Heart right ventricle (tissue), 16 donors: ENCODE measurements at regions of chr15 and their contacts with region 1.

Region 1: DNA sequence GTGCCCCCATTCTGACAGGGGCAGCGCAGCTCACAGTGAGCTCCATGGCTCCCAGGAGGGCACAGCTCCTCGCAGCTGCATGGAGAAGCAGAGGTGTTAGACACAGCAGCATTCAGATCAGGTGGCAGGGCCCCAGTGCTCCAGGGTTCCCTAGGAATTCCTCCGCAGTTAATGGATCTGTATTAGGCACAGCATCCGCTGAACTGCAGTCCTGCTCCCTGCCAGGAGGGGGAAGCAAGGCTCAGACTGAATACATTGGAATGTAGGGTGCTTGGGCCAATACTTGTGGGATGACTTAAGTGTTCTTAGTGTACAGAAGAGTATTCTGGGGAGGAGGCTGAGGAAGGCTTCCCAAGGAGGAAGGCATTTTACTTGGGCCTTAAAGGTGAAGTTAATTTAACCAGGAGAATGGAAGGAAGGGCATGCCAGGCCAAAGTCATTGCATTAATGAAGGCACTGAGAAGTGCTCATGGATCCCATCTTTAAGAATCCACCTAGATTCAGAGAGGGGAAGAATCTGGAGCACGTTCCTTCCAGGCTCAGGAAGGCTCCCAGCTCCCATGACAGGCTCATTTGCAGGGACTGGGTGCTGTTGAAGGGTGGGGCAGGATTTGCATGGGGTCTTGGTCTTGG is 111.6 kb downstream of the RAB11A start:
- DNase-seq: peak; percentile 32 to 45
- ATAC-seq: peak in 7 of 8 donors; percentile 52 to 78 (median 66)
- H3K4me3 ChIP-seq: no peak overlapping the region
- H3K27ac ChIP-seq: no peak overlapping the region
- H3K4me1 ChIP-seq: peaks cover 0 to 11% (median 6%) of the 10 kb centered on the region in 9 donors
- H3K27me3 ChIP-seq: peaks cover 0 to 61% (median 45%) of the 10 kb centered on the region in 7 donors
- CTCF ChIP-seq: peak; percentile 32 to 74 (median 63)

Region 2: GRCh38 chr15:65862682-65863081 is 118.3 kb before region 1 on chr15:
- intact Hi-C with region 1: no loop called
- DNase-seq: no peak
- ATAC-seq: peak in 6 of 8 donors; percentile 33 to 86 (median 44)
- H3K4me3 ChIP-seq: no peak overlapping the region
- H3K27ac ChIP-seq: no peak overlapping the region
- H3K4me1 ChIP-seq: no peaks in the 10 kb centered on the region
- H3K27me3 ChIP-seq: no peaks in the 10 kb centered on the region
- CTCF ChIP-seq: peak in 7 of 9 donors; percentile 20 to 55 (median 33)

Region 3: DNA sequence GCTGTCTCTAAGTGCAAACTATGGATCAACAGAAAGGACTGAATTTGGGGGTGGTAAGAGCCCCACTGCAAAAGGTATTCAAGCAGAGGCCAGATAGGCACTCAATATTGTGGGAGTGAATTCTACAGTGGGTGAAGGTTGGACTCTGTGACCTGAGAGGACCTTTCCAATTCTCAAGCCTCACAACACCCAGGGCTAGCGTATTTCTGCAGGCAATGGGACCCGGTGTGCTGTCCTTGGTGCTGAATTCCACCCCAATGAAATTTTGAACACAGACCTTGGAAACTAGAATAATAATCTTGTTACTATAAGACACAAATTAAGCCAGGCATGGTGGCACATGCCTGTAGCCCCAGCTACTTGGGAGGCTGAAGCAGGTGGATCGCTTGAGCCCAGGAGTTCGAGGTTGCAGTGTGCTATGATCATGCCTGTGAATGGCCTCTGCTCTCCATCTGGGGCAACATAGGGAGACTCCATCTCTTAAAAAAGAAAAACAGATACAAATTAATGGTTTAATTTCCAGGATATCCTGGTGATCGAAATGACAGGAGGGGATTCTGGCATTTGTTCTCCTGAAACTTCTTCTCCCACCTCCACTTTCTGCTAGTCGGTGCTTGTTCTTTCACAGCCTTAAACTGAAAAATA is 23.8 kb after region 1 on chr15:
- intact Hi-C with region 1: no loop called
- DNase-seq: peak in 1 of 2 donors; percentile 17
- ATAC-seq: no peak
- H3K4me3 ChIP-seq: no peak overlapping the region
- H3K27ac ChIP-seq: no peak overlapping the region
- H3K4me1 ChIP-seq: no peaks in the 10 kb centered on the region
- H3K27me3 ChIP-seq: peaks cover 0 to 32% (median 15%) of the 10 kb centered on the region in 7 donors
- CTCF ChIP-seq: no peak

Region 4: DNA sequence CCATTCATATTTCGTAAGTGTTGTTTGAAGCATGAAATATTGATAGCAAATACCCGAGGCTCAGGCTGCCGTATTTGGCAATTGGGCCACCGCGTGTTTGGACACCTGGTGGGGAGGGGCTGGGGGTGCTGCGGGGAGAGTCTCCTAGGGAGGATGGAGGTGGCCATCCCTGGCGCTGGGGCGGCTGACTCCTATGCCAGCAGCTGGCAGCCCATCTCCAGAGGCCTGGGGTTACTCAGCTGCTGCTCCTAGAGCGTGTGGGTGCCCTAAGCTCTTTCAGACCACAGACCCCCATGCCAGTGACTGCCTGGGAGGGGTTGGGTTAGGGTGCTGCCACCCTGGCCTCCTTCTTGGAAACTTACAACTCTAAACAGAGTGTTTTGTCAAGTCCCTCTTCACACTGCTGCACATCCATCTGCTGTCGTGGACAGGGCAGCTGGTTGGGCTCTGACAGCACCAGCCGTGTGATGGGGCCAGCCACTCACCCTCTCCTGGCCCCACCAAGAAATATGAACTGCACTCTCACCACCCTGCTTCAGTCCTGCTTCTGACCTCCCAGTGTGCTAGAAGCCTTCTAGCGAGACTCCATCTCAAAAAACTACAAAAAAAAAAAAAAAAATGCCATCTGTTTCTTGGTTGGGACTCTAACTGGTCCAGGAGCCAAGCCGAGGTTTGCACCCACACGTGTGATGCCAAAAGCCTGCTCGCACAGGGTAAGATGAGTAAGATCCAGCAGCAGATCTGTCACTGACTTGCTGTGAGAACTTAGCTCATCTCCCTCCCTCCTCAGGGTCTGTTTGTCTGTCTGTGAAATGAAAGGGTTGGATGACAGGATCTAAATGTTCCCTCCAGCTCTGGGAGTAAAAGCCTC is 116.4 kb after region 1 on chr15:
- intact Hi-C with region 1: loop called in 1 of 10 experiments (anchors 10 kb)
- DNase-seq: no peak
- ATAC-seq: peak in 4 of 8 donors; percentile 16 to 57 (median 37)
- H3K4me3 ChIP-seq: no peak overlapping the region
- H3K27ac ChIP-seq: no peak overlapping the region
- H3K4me1 ChIP-seq: no peaks in the 10 kb centered on the region
- H3K27me3 ChIP-seq: peaks cover 0 to 7% (median 0%) of the 10 kb centered on the region in 7 donors
- CTCF ChIP-seq: no peak

Region 5: GRCh38 chr15:66138892-66139590 is 158.1 kb after region 1 on chr15:
- intact Hi-C with region 1: loop called in 2 of 10 experiments (anchors 10 kb)
- DNase-seq: no peak
- ATAC-seq: peak in 1 of 8 donors; percentile 23
- H3K4me3 ChIP-seq: no peak overlapping the region
- H3K27ac ChIP-seq: no peak overlapping the region
- H3K4me1 ChIP-seq: peaks cover 0 to 21% (median 8%) of the 10 kb centered on the region in 9 donors
- H3K27me3 ChIP-seq: no peaks in the 10 kb centered on the region
- CTCF ChIP-seq: no peak

Region 6: GRCh38 chr15:66145731-66146182 is 164.8 kb after region 1 on chr15:
- intact Hi-C with region 1: loop called in 3 of 10 experiments (anchors 10 kb)
- DNase-seq: no peak
- ATAC-seq: no peak
- H3K4me3 ChIP-seq: no peak overlapping the region
- H3K27ac ChIP-seq: no peak overlapping the region
- H3K4me1 ChIP-seq: no peaks in the 10 kb centered on the region
- H3K27me3 ChIP-seq: peaks cover 0 to 26% (median 0%) of the 10 kb centered on the region in 7 donors
- CTCF ChIP-seq: no peak

Region 7: DNA sequence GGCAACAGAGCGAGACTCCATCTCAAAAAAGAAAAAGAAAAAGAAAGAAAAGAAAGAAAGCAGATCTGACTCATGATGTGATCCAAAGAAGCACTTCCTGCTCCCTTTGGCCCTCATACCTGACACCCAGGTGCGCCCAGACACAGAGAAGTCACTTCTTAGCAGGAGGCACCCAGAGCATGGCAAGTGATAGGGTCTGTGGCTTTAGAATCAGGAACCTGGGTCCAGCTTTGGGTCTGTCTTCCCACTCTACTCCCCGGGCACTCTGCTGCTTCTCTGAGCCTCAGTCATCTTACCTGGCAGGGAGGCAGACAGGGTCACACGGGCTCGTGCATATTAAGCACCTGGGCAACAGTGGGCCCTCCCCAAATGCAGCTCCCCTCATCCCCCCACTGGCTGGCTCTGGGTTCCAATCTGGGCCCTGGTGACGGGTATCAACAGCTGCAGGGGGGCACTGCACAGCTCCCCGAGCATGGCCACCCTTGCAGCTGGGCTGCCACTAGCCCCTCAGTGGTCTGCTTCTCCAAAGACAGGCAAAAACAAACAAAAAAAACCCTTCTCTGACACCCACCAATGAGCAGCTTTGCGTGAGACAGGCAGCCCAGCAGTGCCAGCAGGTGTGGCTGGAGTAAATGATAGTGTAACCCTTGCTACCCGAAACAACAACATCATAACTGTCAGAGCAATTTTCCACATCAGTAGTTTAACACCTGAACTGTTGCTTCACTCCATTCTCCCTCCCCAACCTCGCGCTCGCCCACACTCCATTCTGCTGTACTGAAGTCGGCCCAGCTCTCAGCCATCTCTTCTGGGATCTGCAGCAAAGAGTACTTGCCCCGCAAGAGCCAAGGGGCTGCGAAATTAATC is 172.8 kb after region 1 on chr15:
- intact Hi-C with region 1: loop called in 3 of 10 experiments (anchors 10 kb)
- DNase-seq: no peak
- ATAC-seq: no peak
- H3K4me3 ChIP-seq: no peak overlapping the region
- H3K27ac ChIP-seq: no peak overlapping the region
- H3K4me1 ChIP-seq: peaks cover 0 to 4% (median 0%) of the 10 kb centered on the region in 9 donors
- H3K27me3 ChIP-seq: peaks cover 0 to 50% (median 32%) of the 10 kb centered on the region in 7 donors
- CTCF ChIP-seq: no peak

Region 8: GRCh38 chr15:66287461-66288057 is 306.6 kb after region 1 on chr15:
- intact Hi-C with region 1: loop called in 8 of 10 experiments (anchors 5 to 10 kb)
- DNase-seq: no peak
- ATAC-seq: no peak
- H3K4me3 ChIP-seq: no peak overlapping the region
- H3K27ac ChIP-seq: no peak overlapping the region
- H3K4me1 ChIP-seq: peaks cover 0 to 13% (median 5%) of the 10 kb centered on the region in 9 donors
- H3K27me3 ChIP-seq: no peaks in the 10 kb centered on the region
- CTCF ChIP-seq: peak; percentile 44 to 75 (median 66)